A673 (cell line): ENCODE measurements at regions of chr13 and their contacts with region 1.

Region 1: GRCh38 chr13:79679334-79679733 is 198.4 kb downstream of the NDFIP2 start:
- DNase-seq: peak; percentile 80
- H3K4me3 ChIP-seq: no peak overlapping the region
- H3K27ac ChIP-seq: no peak overlapping the region
- H3K4me1 ChIP-seq: no peaks in the 10 kb centered on the region
- H3K27me3 ChIP-seq: no peaks in the 10 kb centered on the region
- CTCF ChIP-seq: peak; percentile 93

Region 2: DNA sequence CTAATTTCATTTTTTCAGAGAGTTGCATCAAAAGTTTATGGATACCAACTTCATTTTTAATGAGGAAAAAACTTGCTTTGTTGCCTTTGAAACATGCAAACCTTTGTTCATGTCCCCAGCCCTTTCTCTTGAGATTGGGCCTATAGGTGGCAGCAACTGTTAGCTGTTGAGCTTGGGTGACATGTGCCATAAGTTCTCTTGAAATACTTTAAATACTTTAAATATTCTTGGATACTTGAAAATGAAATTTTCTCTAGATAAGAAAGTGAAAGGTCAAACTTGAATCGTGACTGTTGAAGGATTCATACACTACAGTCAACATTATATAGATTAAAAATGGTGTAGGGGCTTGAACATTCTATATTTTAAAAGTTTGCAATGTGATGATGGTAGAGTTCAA is 96.5 kb after region 1 on chr13:
- CTCF ChIA-PET with region 1: no interaction called
- POLR2A ChIA-PET with region 1: no interaction called
- intact Hi-C with region 1: loop called (anchors 1 kb)
- DNase-seq: peak; percentile 79
- H3K4me3 ChIP-seq: no peak overlapping the region
- H3K27ac ChIP-seq: no peak overlapping the region
- H3K4me1 ChIP-seq: peaks cover 22% of the 10 kb centered on the region
- H3K27me3 ChIP-seq: no peaks in the 10 kb centered on the region
- CTCF ChIP-seq: peak; percentile 83

Region 3: GRCh38 chr13:79901336-79901735 is 222.0 kb after region 1 on chr13:
- CTCF ChIA-PET with region 1: no interaction called
- POLR2A ChIA-PET with region 1: no interaction called
- intact Hi-C with region 1: loop called (anchors 5 kb)
- DNase-seq: peak; percentile 93
- H3K4me3 ChIP-seq: no peak overlapping the region
- H3K27ac ChIP-seq: no peak overlapping the region
- H3K4me1 ChIP-seq: peaks cover 33% of the 10 kb centered on the region
- H3K27me3 ChIP-seq: no peaks in the 10 kb centered on the region
- CTCF ChIP-seq: peak; percentile 58

Region 4: DNA sequence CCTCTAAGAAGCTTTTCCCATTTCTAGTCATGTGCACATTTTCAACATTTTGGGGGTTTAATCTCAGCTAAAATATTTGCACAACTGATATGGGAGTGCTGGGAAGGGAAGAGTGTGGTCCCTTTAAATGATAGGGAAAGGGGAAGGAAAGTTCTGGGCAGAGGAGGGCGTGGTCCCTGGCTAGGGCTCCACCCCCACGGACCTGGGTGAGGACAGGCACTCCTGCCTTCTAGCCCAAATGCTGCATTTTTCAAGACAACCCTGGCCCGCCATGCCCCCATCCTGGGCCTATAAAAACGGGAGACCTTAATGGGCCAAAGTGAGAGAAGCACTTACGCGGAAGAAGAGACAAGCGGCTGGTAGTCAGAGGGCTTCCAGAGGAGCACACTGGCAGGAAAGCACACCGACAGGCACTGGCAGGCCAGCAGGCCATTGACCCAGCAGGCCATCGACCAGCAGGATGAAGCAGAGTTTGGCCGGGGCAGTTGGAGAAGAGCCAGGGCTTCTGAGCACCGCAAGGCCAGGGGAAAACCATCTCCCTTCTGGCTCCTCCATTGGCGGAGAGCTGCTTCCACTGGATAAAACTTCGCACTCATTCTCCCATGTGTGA is 394.9 kb after region 1 on chr13:
- CTCF ChIA-PET with region 1: interaction called, 10 read pairs
- POLR2A ChIA-PET with region 1: no interaction called
- intact Hi-C with region 1: no loop called
- DNase-seq: no peak
- H3K4me3 ChIP-seq: no peak overlapping the region
- H3K27ac ChIP-seq: no peak overlapping the region
- H3K4me1 ChIP-seq: no peaks in the 10 kb centered on the region
- H3K27me3 ChIP-seq: no peaks in the 10 kb centered on the region
- CTCF ChIP-seq: no peak